B cell (primary cell): ENCODE measurements at regions of chr6 and their contacts with region 1.

Region 1: DNA sequence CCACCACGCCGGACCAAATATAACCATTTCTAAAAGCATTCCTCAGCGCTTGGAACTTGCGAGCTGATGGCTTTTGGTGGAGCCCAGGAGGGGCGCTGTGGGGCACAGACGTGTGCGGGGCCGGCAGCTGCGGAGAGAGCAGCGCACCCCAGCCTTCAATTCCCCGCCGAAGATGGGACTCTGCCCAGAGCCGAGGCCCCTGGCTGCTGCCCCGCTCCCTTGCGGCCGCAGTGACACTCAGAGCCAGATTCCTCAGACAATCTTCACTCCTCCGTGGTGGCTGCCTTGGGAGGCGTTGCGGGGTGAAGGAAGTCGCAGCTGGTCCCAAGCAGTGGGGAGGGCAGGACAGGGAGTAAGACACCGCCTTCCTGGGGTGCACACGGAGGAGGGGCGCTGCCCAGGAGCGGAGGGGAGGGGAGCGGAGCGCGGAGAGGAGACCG is 87.7 kb downstream of the TMEM242 start:
- DNase-seq: peak; percentile 66
- ATAC-seq: peak; percentile 63
- H3K4me3 ChIP-seq: peak overlapping the region; percentile 2 to 69 (median 59)
- H3K4me3 Mint-ChIP-seq: peak overlapping the region; percentile 97
- H3K27ac ChIP-seq: no peak overlapping the region
- H3K27ac Mint-ChIP-seq: peak overlapping the region; percentile 77
- H3K4me1 ChIP-seq: peaks cover 18 to 20% of the 10 kb centered on the region in 2 donors
- H3K4me1 Mint-ChIP-seq: peaks cover 22% of the 10 kb centered on the region
- H3K27me3 ChIP-seq: peaks cover 0 to 60% (median 28%) of the 10 kb centered on the region in 4 experiments
- H3K27me3 Mint-ChIP-seq: peaks cover 66% of the 10 kb centered on the region
- CTCF ChIP-seq: peak; percentile 70

Region 2: DNA sequence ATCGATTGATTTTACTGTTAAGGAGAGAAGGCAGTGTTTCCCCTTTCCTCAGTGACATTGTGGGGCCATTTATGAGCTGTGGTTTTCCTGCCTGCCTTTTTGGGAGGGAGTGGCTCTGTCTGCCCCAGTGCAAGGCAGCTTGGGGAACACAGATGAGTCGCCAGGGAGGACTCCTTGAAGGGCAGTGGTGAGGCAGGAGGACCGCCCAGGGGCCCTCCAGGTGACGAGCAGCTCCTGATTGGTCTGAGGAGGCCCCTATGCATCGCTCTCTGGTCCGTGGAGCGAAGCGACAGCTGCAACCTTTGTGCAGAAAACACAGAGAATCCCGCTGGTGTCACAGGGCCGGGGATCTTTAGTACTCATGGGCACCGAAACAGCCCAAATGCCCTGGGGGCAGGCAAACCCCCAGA is 12.6 kb before region 1 on chr6:
- CTCF ChIA-PET with region 1: interaction called, 14 read pairs
- POLR2A ChIA-PET with region 1: interaction called, 5 read pairs
- intact Hi-C with region 1: loop called (anchors 2 kb)
- DNase-seq: peak; percentile 69
- ATAC-seq: peak; percentile 53
- H3K4me3 ChIP-seq: peak overlapping the region in 4 of 5 experiments; percentile 23 to 40 (median 32)
- H3K4me3 Mint-ChIP-seq: peak overlapping the region; percentile 89
- H3K27ac ChIP-seq: peak overlapping the region; percentile 44 to 68
- H3K27ac Mint-ChIP-seq: peak overlapping the region; percentile 84
- H3K4me1 ChIP-seq: peaks cover 46 to 49% of the 10 kb centered on the region in 2 donors
- H3K4me1 Mint-ChIP-seq: peaks cover 42% of the 10 kb centered on the region
- H3K27me3 ChIP-seq: peaks cover 0 to 16% (median under 1%) of the 10 kb centered on the region in 4 experiments
- H3K27me3 Mint-ChIP-seq: no peaks in the 10 kb centered on the region
- CTCF ChIP-seq: no peak